Motor neuron (in vitro differentiated cells): ENCODE measurements at regions of chr3 and their contacts with region 1.

Region 1: GRCh38 chr3:124576565-124577493 is 153.4 kb upstream of the UMPS start:
- ATAC-seq: no peak
- H3K4me3 ChIP-seq: no peak overlapping the region
- H3K27ac ChIP-seq: no peak overlapping the region
- H3K4me1 ChIP-seq: no peaks in the 10 kb centered on the region

Region 2: GRCh38 chr3:124318014-124318413 is 258.8 kb before region 1 on chr3:
- in situ Hi-C with region 1: no loop called
- ATAC-seq: peak in 2 of 8 experiments; percentile 19 to 48
- H3K4me3 ChIP-seq: no peak overlapping the region
- H3K27ac ChIP-seq: no peak overlapping the region
- H3K4me1 ChIP-seq: peaks cover 4% of the 10 kb centered on the region in 2 donors

Region 3: DNA sequence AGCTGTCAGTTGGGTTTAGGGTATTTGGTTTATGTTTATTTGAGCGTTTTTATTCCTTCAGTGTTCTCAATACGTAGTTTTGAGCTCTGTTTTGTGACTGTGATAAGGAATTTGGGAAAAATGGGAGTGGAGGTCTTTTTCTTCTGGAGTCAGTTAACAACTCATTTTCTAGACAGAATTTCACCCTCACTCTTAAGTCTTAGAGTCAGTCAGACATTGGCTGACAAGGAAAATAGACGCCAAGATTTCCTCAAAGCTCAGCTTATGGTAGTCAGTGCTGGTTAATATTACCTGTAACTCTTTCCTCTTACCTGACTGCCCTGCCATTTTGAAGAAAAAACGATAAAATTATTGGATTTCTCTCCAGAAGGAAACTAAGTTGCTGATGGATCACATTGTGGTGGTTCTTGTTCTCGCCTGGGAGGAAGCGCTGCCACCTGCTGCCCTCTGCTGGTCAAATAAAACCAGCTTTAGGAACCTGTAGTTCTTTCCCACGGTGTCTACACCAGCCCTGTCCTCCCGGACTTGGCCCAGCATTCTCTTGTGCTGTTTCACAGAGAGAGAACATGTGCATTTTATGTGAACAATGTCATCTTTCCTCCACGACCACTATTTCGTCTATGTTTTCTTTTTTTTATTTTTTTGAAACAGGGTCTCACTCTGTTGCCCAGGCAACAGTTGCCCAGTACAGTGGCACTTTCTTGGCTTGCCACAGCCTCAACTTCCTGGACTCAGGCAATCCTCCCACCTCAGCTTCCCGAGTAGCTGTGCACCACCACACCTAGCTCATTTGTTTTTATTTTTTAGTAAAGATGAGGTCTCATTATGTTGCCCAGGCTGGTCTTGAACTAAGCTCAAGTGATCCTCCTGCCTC is 112.0 kb after region 1 on chr3:
- in situ Hi-C with region 1: loop called in 4 of 9 experiments (anchors 10 to 25 kb)
- ATAC-seq: peak in 6 of 8 experiments; percentile 55 to 99 (median 91)
- H3K4me3 ChIP-seq: no peak overlapping the region
- H3K27ac ChIP-seq: no peak overlapping the region
- H3K4me1 ChIP-seq: no peaks in the 10 kb centered on the region

Region 4: DNA sequence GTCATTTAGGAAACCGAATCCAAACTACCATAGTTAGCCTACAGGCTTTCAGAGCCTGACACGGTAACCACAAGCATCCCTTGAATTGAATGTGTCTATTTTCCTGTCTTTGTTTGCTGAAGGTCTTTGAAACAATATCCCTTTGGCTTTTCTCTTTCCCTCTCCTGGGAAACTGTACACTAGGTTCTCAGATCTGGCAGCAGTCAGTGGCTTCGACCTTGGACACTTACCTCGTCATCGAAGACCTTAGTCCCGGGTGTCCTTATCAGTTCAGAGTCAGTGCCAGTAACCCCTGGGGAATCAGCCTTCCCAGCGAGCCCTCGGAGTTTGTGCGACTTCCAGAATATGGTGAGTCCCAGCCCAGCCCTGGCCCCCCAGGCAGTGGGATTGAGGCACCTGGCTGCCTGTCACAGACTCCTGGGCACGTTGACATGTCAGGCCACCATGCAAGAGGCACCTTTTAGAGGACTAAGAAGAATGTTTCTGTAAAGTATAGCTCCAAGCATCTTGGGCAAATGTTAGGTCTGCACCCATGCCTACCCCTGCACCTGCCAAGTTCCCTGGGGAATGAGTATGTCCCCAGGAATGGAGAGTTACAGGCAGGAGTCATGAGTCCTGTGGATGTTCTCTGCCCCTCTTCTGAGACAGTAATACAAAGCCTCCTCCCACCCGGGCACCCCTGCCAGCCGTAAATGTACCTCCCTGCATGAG is 123.0 kb after region 1 on chr3:
- in situ Hi-C with region 1: loop called in 3 of 9 experiments (anchors 10 to 25 kb)
- ATAC-seq: peak in 1 of 8 experiments; percentile 81
- H3K4me3 ChIP-seq: no peak overlapping the region
- H3K27ac ChIP-seq: no peak overlapping the region
- H3K4me1 ChIP-seq: peaks cover 0 to 6% of the 10 kb centered on the region in 2 donors